Endothelial cell of umbilical vein (primary cell): ENCODE measurements at regions of chrX and their contacts with region 1.

Region 1: GRCh38 chrX:74382613-74383012 is 38.7 kb upstream of the SLC16A2 start:
- DNase-seq: peak; percentile 34
- H3K4me3 ChIP-seq: no peak overlapping the region
- H3K27ac ChIP-seq: no peak overlapping the region
- H3K4me1 ChIP-seq: no peaks in the 10 kb centered on the region
- H3K27me3 ChIP-seq: no peaks in the 10 kb centered on the region
- CTCF ChIP-seq: peak; percentile 55 to 73
- POLR2A ChIP-seq: no peak

Region 2: DNA sequence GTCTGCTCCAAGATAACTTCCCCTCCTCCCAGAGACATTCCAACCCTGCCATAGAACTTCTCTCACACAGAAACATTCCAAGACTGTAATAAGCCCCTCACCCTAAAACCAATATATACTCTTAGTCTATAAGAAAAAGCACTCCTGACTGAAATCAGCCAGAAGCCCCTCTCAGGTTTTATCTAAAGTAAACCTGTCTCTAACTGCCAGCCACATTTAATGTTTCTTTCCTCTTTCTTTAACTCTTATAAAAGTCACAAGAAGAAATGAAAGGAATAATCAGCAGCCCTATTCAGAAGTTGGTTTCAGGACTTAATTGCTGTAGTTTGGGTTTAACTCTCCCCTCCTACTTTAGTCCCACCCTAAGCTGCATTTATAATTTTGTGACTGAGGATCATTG is 243.7 kb before region 1 on chrX:
- CTCF ChIA-PET with region 1: no interaction called
- POLR2A ChIA-PET with region 1: no interaction called
- dilution Hi-C with region 1: no loop called
- intact Hi-C with region 1: no loop called
- DNase-seq: no peak
- H3K4me3 ChIP-seq: no peak overlapping the region
- H3K27ac ChIP-seq: no peak overlapping the region
- H3K4me1 ChIP-seq: no peaks in the 10 kb centered on the region
- H3K27me3 ChIP-seq: no peaks in the 10 kb centered on the region
- CTCF ChIP-seq: no peak
- POLR2A ChIP-seq: no peak

Region 3: DNA sequence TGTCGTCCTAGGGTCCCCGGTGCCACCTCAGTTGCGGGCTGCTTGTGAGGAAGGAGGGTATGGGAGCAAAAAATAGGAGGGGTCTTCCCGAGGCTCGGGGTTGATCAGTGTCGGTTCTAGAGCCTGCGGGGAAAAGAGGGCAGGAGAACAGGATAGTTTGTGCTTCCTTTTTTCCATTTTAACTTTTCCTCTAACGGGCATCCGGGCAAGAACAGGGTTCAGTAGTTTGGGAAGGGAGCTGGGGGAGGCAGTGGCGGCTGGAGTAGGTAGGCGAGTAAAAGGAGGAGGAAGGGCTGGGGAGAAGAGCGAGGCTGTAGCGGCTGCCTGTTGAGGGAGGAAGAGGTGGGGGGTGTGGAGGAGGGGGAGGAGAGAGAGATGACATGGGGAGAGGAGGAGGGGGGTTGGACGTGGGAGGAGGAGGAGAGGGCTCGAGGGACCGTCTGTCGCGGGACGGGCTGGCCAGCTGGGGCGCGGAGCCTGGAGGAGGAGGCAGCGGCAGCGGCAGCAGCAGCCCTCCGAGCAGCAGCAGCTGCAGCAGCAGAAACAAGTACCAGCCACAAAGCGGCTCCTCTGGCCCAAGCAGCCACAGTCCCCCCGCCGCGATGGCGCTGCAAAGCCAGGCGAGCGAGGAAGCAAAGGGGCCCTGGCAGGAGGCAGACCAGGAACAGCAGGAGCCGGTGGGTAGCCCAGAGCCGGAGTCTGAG is 38.6 kb after region 1 on chrX and contains the start of gene SLC16A2:
- CTCF ChIA-PET with region 1: no interaction called
- POLR2A ChIA-PET with region 1: no interaction called
- dilution Hi-C with region 1: no loop called
- intact Hi-C with region 1: loop called (anchors 2 kb)
- DNase-seq: peak; percentile 48
- H3K4me3 ChIP-seq: peak within 1 kb of the TSS; percentile 29 to 44 (median 43)
- H3K27ac ChIP-seq: no peak within 1 kb of the TSS
- H3K4me1 ChIP-seq: no peaks in the 10 kb centered on the region
- H3K27me3 ChIP-seq: no peaks in the 10 kb centered on the region
- CTCF ChIP-seq: no peak
- POLR2A ChIP-seq: no peak
- total RNA-seq, gene SLC16A2: 3.1 and 3.3 TPM in 2 replicates

Region 4: DNA sequence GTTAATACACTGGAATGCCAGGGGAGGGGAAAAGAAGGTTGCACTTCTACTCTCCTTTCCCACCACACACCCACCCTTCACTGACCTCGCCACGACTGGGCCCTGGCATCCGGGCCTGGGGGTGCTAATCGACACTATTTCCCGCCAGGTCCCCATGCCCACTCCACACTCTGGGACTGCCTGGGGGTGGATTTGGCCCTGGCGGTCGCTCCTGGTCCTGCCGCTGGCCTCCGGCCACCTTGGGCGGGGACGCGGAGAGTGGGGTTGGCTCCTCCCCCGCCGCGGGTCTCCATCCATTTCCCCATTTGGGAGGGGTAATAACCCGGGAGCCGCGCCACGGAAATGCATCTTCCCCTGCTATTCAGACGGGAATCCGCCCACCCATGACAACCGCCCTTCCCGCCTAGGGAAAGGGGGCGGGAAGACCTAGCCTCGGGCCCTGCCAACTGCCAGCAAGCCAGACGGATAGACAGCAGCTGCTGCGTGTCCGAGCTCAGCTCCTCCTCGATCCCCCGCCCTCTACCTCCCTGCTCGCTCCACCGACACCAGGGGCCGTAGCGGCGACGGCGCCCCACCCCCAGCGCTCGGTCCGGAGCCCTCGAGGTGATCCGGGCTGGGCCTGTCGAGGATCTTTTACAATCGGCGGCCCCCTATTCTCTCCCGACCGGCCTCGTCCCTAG is 153.7 kb after region 1 on chrX:
- CTCF ChIA-PET with region 1: no interaction called
- POLR2A ChIA-PET with region 1: no interaction called
- dilution Hi-C with region 1: no loop called
- intact Hi-C with region 1: loop called (anchors 1 kb)
- DNase-seq: peak; percentile 72
- H3K4me3 ChIP-seq: peak overlapping the region; percentile 32 to 46 (median 35)
- H3K27ac ChIP-seq: peak overlapping the region; percentile 68
- H3K4me1 ChIP-seq: peaks cover 9% of the 10 kb centered on the region
- H3K27me3 ChIP-seq: no peaks in the 10 kb centered on the region
- CTCF ChIP-seq: peak; percentile 23 to 50
- POLR2A ChIP-seq: no peak